Mammary epithelial cell (primary cell): ENCODE measurements at regions of chrX and their contacts with region 1.

Region 1: DNA sequence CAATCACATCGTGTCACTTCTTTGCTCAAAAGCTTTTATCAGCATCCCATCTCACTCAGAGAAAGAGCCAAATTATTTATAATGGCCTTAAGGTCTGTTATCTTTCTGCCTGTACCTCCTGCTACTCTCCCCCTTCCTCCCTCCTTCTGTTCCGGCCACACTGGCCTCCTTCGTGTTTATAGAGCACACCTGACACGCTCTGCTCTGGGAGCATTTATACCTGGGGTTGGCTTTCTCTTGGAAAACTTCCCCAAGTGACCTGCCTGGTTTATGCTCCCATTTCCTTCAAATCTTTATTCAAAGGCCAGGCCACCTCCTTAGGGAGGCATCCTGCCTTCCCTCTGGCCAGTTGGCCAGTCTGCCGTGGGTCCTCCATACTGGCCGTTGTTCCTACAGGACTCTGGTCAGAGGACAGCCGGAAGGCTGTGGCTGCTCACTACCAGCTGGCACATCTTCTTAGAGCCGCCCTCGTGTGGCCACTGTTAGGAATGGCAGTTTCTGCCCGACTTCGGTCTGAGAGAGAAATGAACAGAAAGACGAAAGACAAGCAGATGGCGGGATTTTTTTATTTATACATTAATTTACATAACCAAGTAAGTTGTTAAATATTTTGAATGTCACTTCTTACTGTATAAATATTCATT is 80.2 kb upstream of the CBLL2 start:
- DNase-seq: peak; percentile 41
- H3K4me3 ChIP-seq: no peak overlapping the region
- H3K27ac ChIP-seq: no peak overlapping the region
- H3K4me1 ChIP-seq: peaks cover 2% of the 10 kb centered on the region
- H3K27me3 ChIP-seq: no peaks in the 10 kb centered on the region
- CTCF ChIP-seq: peak; percentile 70 to 82

Region 2: GRCh38 chrX:22272613-22273012 is 80.1 kb after region 1 on chrX and contains the start of gene CBLL2:
- CTCF ChIA-PET with region 1: no interaction called
- dilution Hi-C with region 1: loop called (anchors 5 kb)
- in situ Hi-C with region 1: no loop called
- intact Hi-C with region 1: loop called (anchors 5 kb)
- DNase-seq: no peak
- H3K4me3 ChIP-seq: no peak within 1 kb of the TSS
- H3K27ac ChIP-seq: no peak within 1 kb of the TSS
- H3K4me1 ChIP-seq: no peaks in the 10 kb centered on the region
- H3K27me3 ChIP-seq: no peaks in the 10 kb centered on the region
- CTCF ChIP-seq: no peak
- total RNA-seq, gene CBLL2: not detected

Region 3: DNA sequence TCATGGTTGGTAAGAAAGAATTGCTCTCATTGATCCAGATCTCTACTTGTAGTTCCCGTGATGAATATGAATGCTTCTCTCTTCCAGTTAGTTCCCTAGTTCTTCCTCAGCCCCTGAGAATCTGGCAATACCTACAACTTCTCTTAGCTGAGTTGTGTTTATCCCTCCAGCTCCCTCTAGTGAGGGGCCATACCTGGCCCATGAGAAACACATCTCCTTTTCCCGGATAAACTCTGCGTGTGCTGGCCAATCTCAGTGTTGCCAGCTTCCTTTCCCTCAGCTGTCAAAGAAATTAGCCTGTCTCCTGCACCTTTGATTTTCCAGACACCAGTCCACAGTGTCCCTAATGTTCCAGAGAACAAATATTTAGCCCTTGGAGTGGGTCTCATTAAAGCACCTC is 85.8 kb after region 1 on chrX:
- CTCF ChIA-PET with region 1: no interaction called
- dilution Hi-C with region 1: loop called (anchors 5 kb)
- in situ Hi-C with region 1: no loop called
- intact Hi-C with region 1: loop called (anchors 5 kb)
- DNase-seq: peak; percentile 19
- H3K4me3 ChIP-seq: no peak overlapping the region
- H3K27ac ChIP-seq: no peak overlapping the region
- H3K4me1 ChIP-seq: no peaks in the 10 kb centered on the region
- H3K27me3 ChIP-seq: no peaks in the 10 kb centered on the region
- CTCF ChIP-seq: peak; percentile 47 to 58